Mammary epithelial cell (primary cell): ENCODE measurements at regions of chr17 and their contacts with region 1.

Region 1: GRCh38 chr17:18025945-18026776 is 12.8 kb downstream of the ATPAF2 start:
- DNase-seq: peak; percentile 68
- H3K4me3 ChIP-seq: no peak overlapping the region
- H3K27ac ChIP-seq: peak overlapping the region; percentile 80
- H3K4me1 ChIP-seq: peaks cover 37% of the 10 kb centered on the region
- H3K27me3 ChIP-seq: no peaks in the 10 kb centered on the region
- CTCF ChIP-seq: peak in 1 of 2 donors; percentile 19

Region 2: GRCh38 chr17:17890773-17891759 is 135.1 kb before region 1 on chr17:
- CTCF ChIA-PET with region 1: interaction called, 5 read pairs
- dilution Hi-C with region 1: no loop called
- in situ Hi-C with region 1: loop called (anchors 5 kb)
- intact Hi-C with region 1: no loop called
- DNase-seq: peak; percentile 57
- H3K4me3 ChIP-seq: no peak overlapping the region
- H3K27ac ChIP-seq: no peak overlapping the region
- H3K4me1 ChIP-seq: no peaks in the 10 kb centered on the region
- H3K27me3 ChIP-seq: no peaks in the 10 kb centered on the region
- CTCF ChIP-seq: peak; percentile 86 to 95

Region 3: GRCh38 chr17:18129041-18129502 is 102.9 kb after region 1 on chr17:
- CTCF ChIA-PET with region 1: no interaction called
- dilution Hi-C with region 1: no loop called
- in situ Hi-C with region 1: no loop called
- intact Hi-C with region 1: no loop called
- DNase-seq: peak; percentile 71
- H3K4me3 ChIP-seq: no peak overlapping the region
- H3K27ac ChIP-seq: no peak overlapping the region
- H3K4me1 ChIP-seq: no peaks in the 10 kb centered on the region
- H3K27me3 ChIP-seq: no peaks in the 10 kb centered on the region
- CTCF ChIP-seq: no peak